Heart right ventricle (tissue), 16 donors: ENCODE measurements at regions of chr14 and their contacts with region 1.

Region 1: DNA sequence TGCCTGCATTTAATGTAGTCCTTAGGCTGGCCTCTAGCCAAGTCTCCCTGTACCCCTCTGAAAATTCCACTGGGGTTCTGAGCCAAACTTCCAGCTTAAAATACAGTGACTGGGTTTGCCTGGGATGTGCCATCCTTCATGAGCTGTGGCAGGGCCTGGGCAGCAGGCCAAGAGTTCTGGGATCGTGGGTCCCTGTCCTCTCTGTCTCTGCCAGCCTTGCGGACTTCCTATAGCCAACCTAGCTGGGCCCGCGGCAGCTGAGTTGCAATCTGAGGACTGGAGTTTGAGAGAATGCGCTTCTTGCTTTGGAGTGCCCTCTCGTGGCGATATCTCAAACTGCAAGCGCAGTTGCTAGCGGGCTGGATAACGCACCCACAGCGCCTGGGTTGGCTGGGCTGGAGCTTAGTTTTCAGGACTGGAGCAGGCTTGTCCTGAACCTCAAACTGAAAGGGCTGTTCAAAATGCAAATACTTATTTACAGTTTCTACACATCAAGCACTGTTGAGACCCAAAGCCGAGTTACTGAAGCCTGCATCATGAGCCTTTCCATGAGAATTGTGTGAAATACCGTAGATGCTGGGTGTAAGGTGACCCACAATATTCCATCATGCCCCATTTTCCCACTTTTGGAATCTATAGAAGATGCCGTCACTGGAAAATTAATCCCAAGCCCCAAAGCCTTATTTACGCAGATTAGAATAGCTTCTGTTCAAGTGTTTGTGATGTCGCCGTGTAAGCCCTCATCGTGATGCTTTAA is 7.3 kb upstream of the IFI27L2 start:
- DNase-seq: peak; percentile 87 to 88
- ATAC-seq: peak; percentile 87 to 95 (median 93)
- H3K4me3 ChIP-seq: no peak overlapping the region
- H3K27ac ChIP-seq: no peak overlapping the region
- H3K4me1 ChIP-seq: peaks cover 0 to 5% (median 0%) of the 10 kb centered on the region in 9 donors
- H3K27me3 ChIP-seq: peaks cover 0 to 9% (median 4%) of the 10 kb centered on the region in 7 donors
- CTCF ChIP-seq: peak; percentile 90 to 99 (median 96)

Region 2: GRCh38 chr14:94036313-94037050 is 100.3 kb before region 1 on chr14:
- intact Hi-C with region 1: loop called (anchors 1 to 5 kb)
- DNase-seq: peak; percentile 64 to 71
- ATAC-seq: peak; percentile 79 to 89 (median 86)
- H3K4me3 ChIP-seq: no peak overlapping the region
- H3K27ac ChIP-seq: no peak overlapping the region
- H3K4me1 ChIP-seq: peaks cover 0 to 18% (median 2%) of the 10 kb centered on the region in 9 donors
- H3K27me3 ChIP-seq: no peaks in the 10 kb centered on the region
- CTCF ChIP-seq: peak; percentile 75 to 90 (median 86)

Region 3: DNA sequence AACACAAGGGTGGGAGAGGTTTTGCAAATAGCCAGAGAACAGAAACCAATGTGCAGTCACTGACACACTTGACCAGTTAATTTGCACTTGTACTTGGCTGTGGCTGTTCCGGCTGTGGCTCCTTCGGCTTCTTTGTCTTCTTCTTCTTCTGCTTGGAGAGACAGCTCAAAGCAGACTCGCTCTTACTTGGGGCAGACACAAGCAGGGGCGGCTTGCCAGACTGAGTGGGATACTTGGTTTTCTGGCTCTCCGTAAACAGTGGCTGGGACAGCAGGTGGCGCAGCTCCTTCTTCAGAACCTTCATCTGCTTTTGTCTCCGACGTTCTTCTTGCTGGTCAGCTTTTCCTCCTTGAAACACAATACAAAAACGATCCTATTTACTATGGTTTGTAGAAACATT is 85.6 kb before region 1 on chr14:
- intact Hi-C with region 1: loop called in 2 of 10 experiments (anchors 5 kb)
- DNase-seq: peak in 1 of 2 donors; percentile 54
- ATAC-seq: peak in 5 of 8 donors; percentile 42 to 56 (median 45)
- H3K4me3 ChIP-seq: no peak overlapping the region
- H3K27ac ChIP-seq: peak overlapping the region in 6 of 10 donors; percentile 18 to 51 (median 32)
- H3K4me1 ChIP-seq: peaks cover 3 to 43% (median 24%) of the 10 kb centered on the region in 9 donors
- H3K27me3 ChIP-seq: no peaks in the 10 kb centered on the region
- CTCF ChIP-seq: peak in 7 of 9 donors; percentile 25 to 57 (median 44)

Region 4: GRCh38 chr14:94173885-94174603 is 37.3 kb after region 1 on chr14 and contains the start of gene PPP4R4:
- intact Hi-C with region 1: loop called in 5 of 10 experiments (anchors 5 kb)
- DNase-seq: peak; percentile 81 to 84
- ATAC-seq: peak; percentile 83 to 93 (median 91)
- H3K4me3 ChIP-seq: peak within 1 kb of the TSS; percentile 35 to 76 (median 64)
- H3K27ac ChIP-seq: peak within 1 kb of the TSS in 4 of 10 donors; percentile 2 to 73 (median 46)
- H3K4me1 ChIP-seq: peaks cover 6 to 24% (median 18%) of the 10 kb centered on the region in 9 donors
- H3K27me3 ChIP-seq: peaks cover 2 to 67% (median 35%) of the 10 kb centered on the region in 7 donors
- CTCF ChIP-seq: no peak
- total RNA-seq, gene PPP4R4: 0.13 to 0.46 (median 0.31) TPM in 5 of 10 donors, not detected in the others

Region 5: GRCh38 chr14:94485944-94486841 is 349.4 kb after region 1 on chr14:
- intact Hi-C with region 1: loop called in 4 of 10 experiments (anchors 2 to 10 kb)
- DNase-seq: peak; percentile 11 to 48
- ATAC-seq: peak; percentile 63 to 86 (median 72)
- H3K4me3 ChIP-seq: no peak overlapping the region
- H3K27ac ChIP-seq: no peak overlapping the region
- H3K4me1 ChIP-seq: peaks cover 0 to 8% (median 7%) of the 10 kb centered on the region in 9 donors
- H3K27me3 ChIP-seq: peaks cover 0 to 73% (median 45%) of the 10 kb centered on the region in 7 donors
- CTCF ChIP-seq: peak; percentile 93 to 100 (median 99)

Region 6: GRCh38 chr14:94761348-94761996 is 624.7 kb after region 1 on chr14:
- intact Hi-C with region 1: no loop called
- DNase-seq: no peak
- ATAC-seq: peak; percentile 13 to 67 (median 54)
- H3K4me3 ChIP-seq: no peak overlapping the region
- H3K27ac ChIP-seq: peak overlapping the region in 2 of 10 donors; percentile 12 to 21
- H3K4me1 ChIP-seq: no peaks in the 10 kb centered on the region
- H3K27me3 ChIP-seq: peaks cover 6 to 89% (median 73%) of the 10 kb centered on the region in 7 donors
- CTCF ChIP-seq: no peak